ENCODE measurements at regions of chr2 and their contacts with region 1.

Region 1: GRCh38 chr2:203453858-203454451 is 81.1 kb downstream of the RAPH1 start:
- DNase-seq: peak; percentile 44
- ATAC-seq: no peak
- H3K4me3 Mint-ChIP-seq: no peak overlapping the region
- H3K27ac Mint-ChIP-seq: no peak overlapping the region
- H3K4me1 Mint-ChIP-seq: no peaks in the 10 kb centered on the region
- H3K27me3 Mint-ChIP-seq: no peaks in the 10 kb centered on the region

Region 2: DNA sequence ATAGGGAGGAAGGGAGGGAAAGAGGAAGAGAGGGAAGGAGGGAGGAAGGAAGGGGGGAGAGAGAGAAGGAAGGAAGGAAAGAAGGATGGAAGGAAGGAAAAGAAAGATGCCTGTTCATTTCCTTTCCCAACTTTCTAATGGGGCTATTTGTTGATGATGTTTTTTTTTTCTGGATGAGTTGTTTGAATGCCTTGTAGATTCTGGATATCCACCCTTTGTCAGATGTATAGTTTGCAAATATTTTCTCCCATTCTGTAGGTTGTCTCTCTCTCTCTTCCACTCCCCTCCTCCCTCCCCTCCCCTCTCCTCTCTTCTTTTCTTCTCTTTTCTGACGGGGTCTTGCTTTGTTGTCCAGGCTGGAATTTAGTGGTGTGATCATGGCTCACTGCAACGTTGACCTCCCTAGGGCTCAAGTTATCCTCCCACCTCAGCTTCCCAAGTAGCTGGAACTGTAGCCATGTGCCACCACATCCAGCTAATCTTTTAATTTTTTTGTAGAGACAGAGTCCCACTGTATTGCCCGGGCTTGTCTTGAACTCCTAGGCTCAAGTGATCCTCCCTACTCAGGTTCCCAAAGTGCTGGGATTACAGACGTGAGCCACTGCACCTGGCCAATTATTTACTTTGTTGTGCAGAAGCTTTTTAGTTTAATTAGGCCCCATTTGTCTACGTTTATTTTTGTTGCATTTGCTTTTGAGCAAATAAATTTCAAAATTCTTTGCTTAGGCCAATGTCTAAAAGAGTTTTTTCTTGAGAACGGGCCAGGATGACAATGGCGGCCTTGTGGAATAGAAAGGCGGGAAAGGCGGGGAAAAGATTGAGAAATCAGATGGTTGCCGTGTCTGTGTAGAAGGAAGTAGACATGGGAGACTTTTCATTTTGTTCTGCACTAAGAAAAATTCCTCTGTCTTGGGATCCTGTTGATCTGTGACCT is 876.4 kb before region 1 on chr2:
- CTCF ChIA-PET with region 1: no interaction called
- POLR2A ChIA-PET with region 1: no interaction called
- intact Hi-C with region 1: loop called (anchors 2 to 10 kb)
- DNase-seq: no peak
- ATAC-seq: no peak
- H3K4me3 Mint-ChIP-seq: no peak overlapping the region
- H3K27ac Mint-ChIP-seq: no peak overlapping the region
- H3K4me1 Mint-ChIP-seq: peaks cover 1% of the 10 kb centered on the region
- H3K27me3 Mint-ChIP-seq: no peaks in the 10 kb centered on the region

Region 3: GRCh38 chr2:202831242-202832220 is 622.4 kb before region 1 on chr2:
- CTCF ChIA-PET with region 1: no interaction called
- POLR2A ChIA-PET with region 1: no interaction called
- intact Hi-C with region 1: loop called (anchors 2 to 5 kb)
- DNase-seq: peak; percentile 73
- ATAC-seq: peak; percentile 97
- H3K4me3 Mint-ChIP-seq: no peak overlapping the region
- H3K27ac Mint-ChIP-seq: no peak overlapping the region
- H3K4me1 Mint-ChIP-seq: peaks cover 10% of the 10 kb centered on the region
- H3K27me3 Mint-ChIP-seq: no peaks in the 10 kb centered on the region

Region 4: DNA sequence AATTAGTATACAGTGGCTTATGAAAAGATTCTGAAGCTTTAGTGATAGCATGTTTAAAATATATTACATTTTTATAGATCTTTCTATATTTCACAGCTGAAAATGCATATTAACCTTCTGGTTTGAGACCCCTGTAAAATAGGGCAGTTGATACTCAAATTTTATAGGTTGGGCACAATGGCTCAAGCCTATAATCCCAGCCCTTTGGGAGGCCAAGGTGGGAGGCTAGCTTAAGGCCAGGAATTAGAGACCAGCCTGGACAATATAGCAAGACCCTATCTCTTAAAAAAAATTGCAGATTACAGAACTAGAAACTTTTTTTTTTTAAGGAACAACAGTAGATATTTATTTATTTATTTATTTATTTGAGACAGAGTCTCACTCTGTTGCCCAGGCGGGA is 408.1 kb before region 1 on chr2:
- CTCF ChIA-PET with region 1: no interaction called
- POLR2A ChIA-PET with region 1: no interaction called
- intact Hi-C with region 1: no loop called
- DNase-seq: no peak
- ATAC-seq: no peak
- H3K4me3 Mint-ChIP-seq: no peak overlapping the region
- H3K27ac Mint-ChIP-seq: no peak overlapping the region
- H3K4me1 Mint-ChIP-seq: no peaks in the 10 kb centered on the region
- H3K27me3 Mint-ChIP-seq: no peaks in the 10 kb centered on the region

Region 5: DNA sequence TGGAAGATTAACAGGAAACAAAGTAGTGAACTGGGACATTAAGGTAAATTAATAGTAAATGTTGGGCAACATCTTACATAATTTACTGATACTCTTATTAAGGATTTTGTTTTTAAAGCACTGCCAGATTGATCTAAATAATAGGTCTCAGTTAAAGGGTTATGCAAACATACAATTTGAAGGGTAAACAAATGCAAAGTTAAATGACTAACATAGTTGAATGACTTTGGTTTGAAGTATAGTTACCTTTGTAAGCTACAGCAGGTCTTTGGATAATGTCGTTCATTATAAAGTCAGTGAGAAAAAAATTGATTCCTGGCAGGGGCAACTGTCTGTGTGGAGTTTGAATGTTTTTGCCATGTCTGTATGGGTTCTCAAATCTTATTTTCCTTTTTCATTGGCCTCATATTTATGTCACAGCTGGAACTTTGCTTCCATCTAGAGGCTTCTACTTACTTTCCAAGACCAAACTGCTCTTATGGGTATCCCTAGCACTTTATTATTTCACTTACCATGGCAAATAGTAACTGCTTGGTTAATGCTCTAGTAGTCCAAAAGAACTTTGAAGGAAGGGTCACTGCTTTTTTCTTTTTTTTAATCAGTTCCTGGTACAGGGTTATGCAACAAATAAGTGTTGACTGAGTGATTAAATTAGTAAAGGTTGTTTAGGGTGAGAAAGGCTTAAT is 331.5 kb before region 1 on chr2:
- CTCF ChIA-PET with region 1: no interaction called
- POLR2A ChIA-PET with region 1: no interaction called
- intact Hi-C with region 1: no loop called
- DNase-seq: no peak
- ATAC-seq: no peak
- H3K4me3 Mint-ChIP-seq: no peak overlapping the region
- H3K27ac Mint-ChIP-seq: no peak overlapping the region
- H3K4me1 Mint-ChIP-seq: no peaks in the 10 kb centered on the region
- H3K27me3 Mint-ChIP-seq: no peaks in the 10 kb centered on the region

Region 6: GRCh38 chr2:203225423-203226039 is 228.4 kb before region 1 on chr2:
- CTCF ChIA-PET with region 1: interaction called, 6 read pairs
- POLR2A ChIA-PET with region 1: no interaction called
- intact Hi-C with region 1: loop called (anchors 1 to 2 kb)
- DNase-seq: peak; percentile 51
- ATAC-seq: peak; percentile 81
- H3K4me3 Mint-ChIP-seq: no peak overlapping the region
- H3K27ac Mint-ChIP-seq: no peak overlapping the region
- H3K4me1 Mint-ChIP-seq: no peaks in the 10 kb centered on the region
- H3K27me3 Mint-ChIP-seq: no peaks in the 10 kb centered on the region

Measured in activated CD4-positive, alpha-beta T cell treated with anti-CD3 and anti-CD28 coated beads for 36 hours (primary cell).